ENCODE measurements at regions of chr1 and their contacts with region 1.

Region 1: GRCh38 chr1:85200870-85201339 is at the start of gene SYDE2:
- DNase-seq: peak; percentile 84
- ATAC-seq: peak; percentile 76
- H3K4me3 ChIP-seq: peak within 1 kb of the TSS; percentile 79
- H3K27ac ChIP-seq: peak within 1 kb of the TSS; percentile 44
- H3K4me1 ChIP-seq: peaks cover 45% of the 10 kb centered on the region
- H3K27me3 ChIP-seq: no peaks in the 10 kb centered on the region
- CTCF ChIP-seq: no peak
- total RNA-seq, gene SYDE2: 4.4 and 6.8 TPM in 2 replicates

Region 2: GRCh38 chr1:85109475-85109874 is 91.4 kb before region 1 on chr1:
- CTCF ChIA-PET with region 1: no interaction called
- POLR2A ChIA-PET with region 1: no interaction called
- intact Hi-C with region 1: loop called (anchors 5 kb)
- DNase-seq: peak; percentile 79
- ATAC-seq: peak; percentile 99
- H3K4me3 ChIP-seq: no peak overlapping the region
- H3K27ac ChIP-seq: no peak overlapping the region
- H3K4me1 ChIP-seq: no peaks in the 10 kb centered on the region
- H3K27me3 ChIP-seq: no peaks in the 10 kb centered on the region
- CTCF ChIP-seq: peak; percentile 86

Region 3: DNA sequence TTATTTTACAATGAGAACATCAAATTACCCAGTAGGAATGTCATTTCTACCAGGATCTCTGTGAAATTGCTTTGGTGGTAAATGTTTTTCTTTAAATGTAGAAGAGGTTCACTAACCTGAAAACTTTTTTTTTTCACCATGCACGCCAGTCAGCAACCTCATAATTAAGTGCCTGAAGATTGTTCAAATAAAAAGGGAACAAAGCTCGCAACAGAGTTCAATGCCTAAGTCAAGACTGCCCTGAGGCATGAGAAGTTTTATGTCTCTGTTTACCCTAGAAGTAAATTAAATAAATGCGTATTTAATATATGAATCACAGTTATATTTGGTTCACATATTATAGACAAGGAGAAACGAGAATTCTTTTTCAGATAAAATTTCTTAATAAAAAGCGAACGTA is 13.8 kb after region 1 on chr1:
- CTCF ChIA-PET with region 1: no interaction called
- POLR2A ChIA-PET with region 1: no interaction called
- intact Hi-C with region 1: loop called (anchors 1 kb)
- DNase-seq: peak; percentile 79
- ATAC-seq: peak; percentile 92
- H3K4me3 ChIP-seq: peak overlapping the region; percentile 56
- H3K27ac ChIP-seq: peak overlapping the region; percentile 55
- H3K4me1 ChIP-seq: peaks cover 19% of the 10 kb centered on the region
- H3K27me3 ChIP-seq: no peaks in the 10 kb centered on the region
- CTCF ChIP-seq: no peak

Region 4: GRCh38 chr1:85240174-85240601 is 39.3 kb after region 1 on chr1:
- CTCF ChIA-PET with region 1: interaction called, 3 read pairs
- POLR2A ChIA-PET with region 1: no interaction called
- intact Hi-C with region 1: loop called (anchors 5 kb)
- DNase-seq: peak; percentile 51
- ATAC-seq: peak; percentile 82
- H3K4me3 ChIP-seq: no peak overlapping the region
- H3K27ac ChIP-seq: no peak overlapping the region
- H3K4me1 ChIP-seq: peaks cover 17% of the 10 kb centered on the region
- H3K27me3 ChIP-seq: no peaks in the 10 kb centered on the region
- CTCF ChIP-seq: peak; percentile 65

Region 5: GRCh38 chr1:85259118-85259911 is 58.4 kb after region 1 on chr1 and contains the start of gene C1orf52:
- CTCF ChIA-PET with region 1: no interaction called
- POLR2A ChIA-PET with region 1: interaction called, 10 read pairs
- intact Hi-C with region 1: loop called (anchors 5 kb)
- DNase-seq: peak; percentile 94
- ATAC-seq: peak; percentile 82
- H3K4me3 ChIP-seq: peak within 1 kb of the TSS; percentile 97
- H3K27ac ChIP-seq: peak within 1 kb of the TSS; percentile 49
- H3K4me1 ChIP-seq: peaks cover 27% of the 10 kb centered on the region
- H3K27me3 ChIP-seq: no peaks in the 10 kb centered on the region
- CTCF ChIP-seq: peak; percentile 90
- total RNA-seq, gene C1orf52: 59.9 and 61.0 TPM in 2 replicates

Region 6: DNA sequence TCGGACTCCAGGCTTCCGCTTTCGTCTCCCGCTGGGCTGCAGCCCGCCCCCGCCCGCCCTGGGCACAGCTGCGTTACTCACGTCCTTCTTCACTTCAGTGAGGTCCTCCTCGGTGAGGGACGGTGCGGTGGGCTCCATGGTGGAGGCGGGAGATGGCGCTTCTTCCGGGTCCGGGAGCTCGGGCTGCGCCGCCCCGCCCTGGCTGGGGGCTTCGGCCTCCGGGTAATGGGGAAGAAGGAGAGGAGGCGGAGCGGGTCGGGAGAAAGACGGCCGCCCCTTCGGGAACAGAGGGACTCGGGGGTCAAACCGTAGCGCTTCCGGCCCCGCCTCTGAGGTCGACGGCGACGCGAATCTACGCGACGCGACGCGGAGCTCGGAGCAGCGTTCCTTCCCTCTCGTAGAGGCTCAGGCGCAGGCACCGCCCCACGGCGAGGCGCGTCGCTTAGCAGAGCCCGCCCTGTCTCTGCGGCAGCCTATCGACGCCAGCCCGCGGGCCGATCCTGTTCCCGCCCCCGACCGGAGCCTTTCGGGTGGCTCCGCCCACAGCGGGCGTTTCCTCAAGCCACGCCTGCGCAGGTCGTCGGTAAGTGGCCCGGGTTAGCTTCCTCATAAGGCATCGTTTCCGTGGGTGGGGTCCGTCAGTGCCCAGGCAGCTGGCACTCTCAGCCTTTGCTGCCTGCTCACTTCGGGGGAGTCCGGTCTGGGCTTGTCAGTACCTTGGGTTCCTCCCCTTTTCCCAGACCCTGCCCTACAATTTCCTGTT is 75.5 kb after region 1 on chr1 and contains the start of gene BCL10:
- CTCF ChIA-PET with region 1: no interaction called
- POLR2A ChIA-PET with region 1: no interaction called
- intact Hi-C with region 1: no loop called
- DNase-seq: peak; percentile 99
- ATAC-seq: peak; percentile 92
- H3K4me3 ChIP-seq: peak within 1 kb of the TSS; percentile 89
- H3K27ac ChIP-seq: peak within 1 kb of the TSS; percentile 66
- H3K4me1 ChIP-seq: peaks cover 45% of the 10 kb centered on the region
- H3K27me3 ChIP-seq: no peaks in the 10 kb centered on the region
- CTCF ChIP-seq: no peak
- total RNA-seq, gene BCL10: 28.1 and 29.9 TPM in 2 replicates

Region 7: DNA sequence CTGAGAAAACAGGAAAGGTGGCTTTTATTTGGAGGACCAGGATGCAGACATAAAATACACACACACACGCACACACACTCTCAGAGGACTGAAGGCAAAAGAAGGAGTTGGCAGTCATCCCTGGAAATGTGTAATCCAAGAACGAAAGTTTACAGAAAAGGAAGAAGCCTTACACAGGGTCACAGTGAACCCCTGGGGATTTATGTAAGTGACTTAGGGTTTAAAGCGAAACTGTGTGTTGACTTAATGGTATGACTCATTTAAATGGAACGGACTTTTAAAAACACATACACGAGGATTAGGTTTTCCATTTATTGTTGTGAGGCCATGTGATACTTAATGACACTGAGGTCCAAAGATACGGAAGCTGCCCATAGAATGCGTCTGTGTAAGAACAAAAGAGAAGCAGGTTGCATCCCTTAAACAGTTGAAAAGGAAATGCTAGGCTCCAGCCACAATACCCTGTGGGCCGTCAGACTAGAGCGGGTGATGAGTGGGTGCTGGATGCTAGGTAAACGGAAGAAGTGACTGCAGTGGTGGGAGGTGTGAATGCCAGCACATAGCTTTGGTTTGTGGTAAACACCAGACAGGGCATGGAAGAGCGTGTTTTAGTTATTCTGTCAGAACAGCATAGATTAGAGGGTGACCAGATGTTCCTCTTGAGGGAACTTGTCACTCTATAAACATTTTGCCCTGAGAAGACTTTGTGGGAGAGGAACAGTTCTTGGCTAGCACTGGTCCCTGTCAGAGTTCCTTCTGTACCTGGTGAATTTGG is 97.1 kb after region 1 on chr1:
- CTCF ChIA-PET with region 1: no interaction called
- POLR2A ChIA-PET with region 1: no interaction called
- intact Hi-C with region 1: loop called (anchors 5 kb)
- DNase-seq: peak; percentile 99
- ATAC-seq: peak; percentile 71
- H3K4me3 ChIP-seq: peak overlapping the region; percentile 33
- H3K27ac ChIP-seq: peak overlapping the region; percentile 95
- H3K4me1 ChIP-seq: peaks cover 57% of the 10 kb centered on the region
- H3K27me3 ChIP-seq: no peaks in the 10 kb centered on the region
- CTCF ChIP-seq: no peak